ENCODE measurements at regions of chr12 and their contacts with region 1.

Region 1: DNA sequence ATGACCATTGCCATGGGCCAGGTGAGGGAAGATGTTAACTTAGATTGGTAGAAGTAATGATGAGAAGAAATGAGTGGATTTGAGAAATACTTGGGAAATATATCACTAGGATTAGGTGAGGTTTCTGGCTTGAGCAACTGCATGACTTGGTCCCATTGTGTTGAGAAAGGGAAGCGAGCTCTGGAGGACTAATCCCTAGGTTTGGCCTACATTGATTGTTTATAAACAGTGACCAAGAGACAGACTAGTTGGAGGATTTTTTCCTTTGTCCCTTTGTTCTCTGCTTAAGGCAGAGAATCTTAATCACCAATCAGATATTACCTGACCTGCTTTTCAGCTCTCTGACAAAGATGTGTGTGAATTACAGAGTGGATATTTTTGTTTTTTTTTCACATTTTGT is 100.5 kb downstream of the AEBP2 start:
- DNase-seq: no peak
- H3K4me3 ChIP-seq: no peak overlapping the region
- H3K27ac ChIP-seq: peak overlapping the region in 1 of 4 donors; percentile 39
- H3K4me1 ChIP-seq: peaks cover 0 to 11% (median 0%) of the 10 kb centered on the region in 3 donors
- H3K27me3 ChIP-seq: no peaks in the 10 kb centered on the region
- CTCF ChIP-seq: no peak
- POLR2A ChIP-seq: no peak

Region 2: DNA sequence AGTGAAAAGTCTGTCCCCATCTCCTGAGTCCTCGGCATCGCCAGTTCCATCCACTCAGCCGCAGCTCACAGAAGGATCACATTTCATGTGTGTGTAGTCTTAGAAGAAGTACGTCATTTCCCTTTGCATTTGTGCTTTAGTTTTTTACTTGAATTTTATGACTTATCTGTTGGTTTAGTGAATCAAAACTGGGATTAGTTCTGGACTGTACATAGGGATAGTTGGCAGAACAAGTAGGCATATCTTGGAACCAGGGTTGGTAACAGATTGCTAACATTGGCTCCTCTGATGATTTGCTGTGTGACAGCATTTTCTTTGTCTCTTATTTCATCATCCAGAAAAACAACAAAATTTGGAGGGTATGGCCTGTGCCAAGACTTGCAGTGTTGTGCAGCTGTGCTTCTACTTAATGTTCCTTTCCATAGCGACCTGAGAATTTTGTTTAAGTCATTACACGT is 170.1 kb before region 1 on chr12:
- intact Hi-C with region 1: loop called (anchors 5 kb)
- DNase-seq: no peak
- H3K4me3 ChIP-seq: no peak overlapping the region
- H3K27ac ChIP-seq: peak overlapping the region; percentile 18 to 65 (median 46)
- H3K4me1 ChIP-seq: peaks cover 0 to 10% (median 0%) of the 10 kb centered on the region in 3 donors
- H3K27me3 ChIP-seq: no peaks in the 10 kb centered on the region
- CTCF ChIP-seq: no peak
- POLR2A ChIP-seq: no peak

Measured in esophagus squamous epithelium (tissue), 5 donors.